GM18951 (cell line): ENCODE measurements at regions of chr9 and their contacts with region 1.

Region 1: GRCh38 chr9:38362852-38363593 is 29.5 kb upstream of the ALDH1B1 start:
- POLR2A ChIP-seq: no peak

Region 2: GRCh38 chr9:37913480-37914153 is 449.4 kb before region 1 on chr9:
- in situ Hi-C with region 1: loop called (anchors 5 kb)
- POLR2A ChIP-seq: no peak